Ascending aorta (tissue), 2 donors: ENCODE measurements at regions of chr6 and their contacts with region 1.

Region 1: DNA sequence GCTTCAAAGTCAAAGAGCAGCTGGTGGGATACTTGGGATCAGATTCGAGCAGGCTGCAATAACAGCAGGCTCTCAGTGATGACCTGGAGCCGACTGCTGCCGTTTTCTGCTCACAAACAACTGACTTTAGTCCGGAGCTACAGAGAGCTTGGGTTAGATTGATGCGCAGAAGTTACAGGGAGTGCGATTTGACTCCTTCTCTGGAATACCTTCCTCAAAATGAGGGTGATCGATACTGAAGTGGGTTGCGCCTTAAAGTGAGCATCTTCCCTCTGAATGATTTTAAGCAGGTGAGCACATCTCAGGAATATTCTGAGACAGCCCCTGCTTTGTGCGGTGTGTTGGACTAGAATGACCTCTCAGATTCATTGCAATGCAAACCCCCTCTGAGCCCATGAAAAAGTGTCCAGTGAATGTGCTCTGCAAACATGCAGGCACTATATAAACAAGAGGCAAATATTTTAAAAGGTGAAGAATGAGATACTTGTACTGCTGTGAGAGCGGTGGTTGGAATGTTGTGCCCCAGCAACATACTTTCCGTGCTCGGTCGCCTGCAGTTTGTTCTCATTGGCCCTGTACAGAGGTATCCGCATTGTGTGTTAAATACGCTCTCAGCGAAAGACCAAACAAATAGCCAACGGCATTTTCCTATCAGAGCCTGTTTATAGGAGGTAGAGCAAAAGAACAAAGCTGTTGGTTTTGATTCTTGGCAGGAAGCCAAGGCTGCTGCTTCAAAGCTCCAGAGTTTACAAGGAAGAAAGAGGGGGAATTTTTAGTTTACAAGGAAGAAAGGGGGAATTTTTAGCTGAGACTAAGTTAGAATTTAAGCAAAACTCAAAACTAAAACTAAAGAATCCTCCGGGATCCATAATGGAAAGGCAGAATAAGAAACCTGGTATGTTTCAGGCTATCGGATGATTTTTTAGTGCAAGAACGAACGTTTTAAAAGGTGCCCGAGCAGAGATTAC is 67.7 kb downstream of the PHACTR2 start:
- DNase-seq: peak in 1 of 2 donors; percentile 70
- H3K4me3 ChIP-seq: peak overlapping the region; percentile 41 to 44
- H3K27ac ChIP-seq: peak overlapping the region; percentile 80 to 86
- H3K4me1 ChIP-seq: peaks cover 9 to 39% of the 10 kb centered on the region in 2 donors
- H3K27me3 ChIP-seq: no peaks in the 10 kb centered on the region
- CTCF ChIP-seq: no peak

Region 2: DNA sequence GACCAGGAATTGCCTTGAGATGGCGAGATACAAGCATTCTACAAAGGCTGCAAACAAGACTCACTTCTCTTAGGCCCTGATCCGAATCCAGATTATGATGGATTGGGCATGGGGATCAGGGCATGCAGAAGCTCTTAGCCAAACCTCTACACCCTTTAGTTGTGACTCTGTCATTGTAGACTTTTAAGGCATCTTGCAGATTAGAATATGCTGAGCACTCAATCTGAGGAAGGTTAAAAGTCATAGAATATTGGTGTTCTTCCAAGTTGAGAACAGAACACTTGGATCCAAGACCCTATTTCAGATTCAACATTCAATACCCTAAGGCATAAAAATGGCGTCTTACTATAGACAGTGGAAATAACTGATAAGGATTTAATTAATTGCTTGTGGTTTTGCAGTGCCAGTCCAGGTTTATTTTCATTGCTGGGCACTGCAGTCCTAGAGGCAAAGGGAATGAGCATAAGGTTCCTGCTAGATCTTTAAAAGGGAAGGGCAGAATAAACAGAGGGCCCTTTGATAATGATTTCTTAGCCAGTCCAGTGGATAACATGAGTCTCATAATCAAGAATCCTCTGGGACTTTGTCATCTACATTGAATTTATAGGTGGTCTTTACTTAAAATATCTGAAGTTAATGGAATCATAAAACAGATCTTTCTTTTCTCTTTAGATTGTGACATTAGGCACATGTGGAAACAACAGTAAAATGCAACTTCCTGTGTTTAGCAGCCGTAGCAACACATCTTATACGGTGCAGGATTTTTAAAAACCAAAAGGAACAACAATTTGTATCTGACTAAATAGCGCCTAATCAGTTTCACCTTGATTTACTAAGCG is 50.1 kb before region 1 on chr6:
- intact Hi-C with region 1: loop called (anchors 5 kb)
- DNase-seq: no peak
- H3K4me3 ChIP-seq: no peak overlapping the region
- H3K27ac ChIP-seq: peak overlapping the region; percentile 77 to 84
- H3K4me1 ChIP-seq: peaks cover 13 to 70% of the 10 kb centered on the region in 2 donors
- H3K27me3 ChIP-seq: no peaks in the 10 kb centered on the region
- CTCF ChIP-seq: no peak

Region 3: DNA sequence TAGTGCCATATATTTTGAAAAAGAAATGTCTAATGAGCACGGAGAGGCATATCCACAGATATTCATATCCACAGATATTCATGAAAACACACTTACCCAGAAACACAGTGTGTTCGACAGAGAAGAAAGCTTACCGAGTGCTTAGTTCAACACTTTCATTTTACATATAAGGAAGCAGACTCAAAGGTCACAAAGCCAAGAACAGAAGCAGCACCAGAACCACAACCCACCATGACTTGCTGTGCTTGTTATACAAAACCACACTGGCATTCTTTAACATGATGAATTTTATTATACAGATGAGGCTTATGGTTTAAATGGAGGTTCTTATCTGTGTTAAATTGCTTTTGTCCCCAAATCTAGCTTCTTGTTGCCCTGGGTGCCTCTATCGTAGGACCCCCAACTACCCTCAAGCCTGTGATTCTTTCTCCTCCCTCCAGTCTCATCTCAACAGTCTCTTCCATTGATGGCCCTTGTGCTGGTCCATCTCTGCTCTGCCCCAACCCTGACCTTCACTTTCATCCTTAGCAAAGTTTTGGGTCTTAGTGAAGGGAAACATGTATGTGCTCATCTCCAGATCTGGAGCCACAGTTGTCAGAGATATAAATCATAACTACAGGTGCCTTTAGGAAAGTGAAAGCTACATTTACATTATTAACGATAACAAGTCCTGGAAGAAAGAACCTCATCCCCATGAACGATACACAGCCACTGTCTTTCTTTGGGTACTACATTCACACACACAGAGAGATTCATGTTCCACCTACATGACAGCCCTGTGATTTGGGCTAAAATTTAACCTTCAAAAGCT is 309.9 kb after region 1 on chr6:
- intact Hi-C with region 1: no loop called
- DNase-seq: no peak
- H3K4me3 ChIP-seq: no peak overlapping the region
- H3K27ac ChIP-seq: no peak overlapping the region
- H3K4me1 ChIP-seq: no peaks in the 10 kb centered on the region
- H3K27me3 ChIP-seq: no peaks in the 10 kb centered on the region
- CTCF ChIP-seq: no peak